Posterior vena cava (tissue), 2 donors: ENCODE measurements at regions of chr9 and their contacts with region 1.

Region 1: DNA sequence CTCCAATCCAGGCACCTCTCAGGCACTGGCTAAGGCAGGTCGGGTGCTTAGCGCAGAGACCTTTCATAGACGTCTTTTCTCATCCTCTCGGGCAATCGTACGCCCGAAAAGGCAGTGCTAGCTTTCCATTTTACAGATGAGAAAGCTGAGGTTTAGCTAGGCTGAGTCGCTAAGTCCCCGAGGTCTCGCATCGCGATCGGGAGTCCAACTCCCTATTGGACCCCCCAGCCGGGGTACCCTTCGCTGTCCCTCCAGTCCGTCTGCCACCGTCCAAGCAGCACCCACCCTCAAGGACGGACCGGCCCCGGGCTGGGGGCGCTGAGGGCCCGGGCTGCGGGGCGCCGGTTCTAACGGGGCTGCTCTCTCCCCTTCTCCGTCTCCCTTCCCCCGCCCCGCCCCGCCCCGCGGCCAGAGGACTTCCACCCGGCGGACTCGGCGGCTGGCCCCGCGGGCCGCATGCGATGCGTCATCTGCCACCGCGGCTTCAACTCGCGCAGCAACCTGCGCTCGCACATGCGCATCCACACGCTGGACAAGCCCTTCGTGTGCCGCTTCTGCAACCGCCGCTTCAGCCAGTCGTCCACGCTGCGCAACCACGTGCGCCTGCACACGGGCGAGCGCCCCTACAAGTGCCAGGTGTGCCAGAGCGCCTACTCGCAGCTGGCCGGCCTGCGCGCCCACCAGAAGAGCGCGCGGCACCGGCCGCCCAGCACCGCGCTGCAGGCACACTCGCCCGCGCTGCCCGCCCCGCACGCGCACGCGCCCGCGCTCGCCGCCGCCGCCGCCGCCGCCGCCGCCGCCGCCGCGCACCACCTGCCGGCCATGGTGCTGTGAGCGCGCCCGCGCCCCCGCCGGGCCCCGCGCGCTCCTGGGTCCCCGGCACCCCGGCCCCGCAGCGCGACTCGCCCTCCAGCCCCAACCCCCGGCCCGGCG is 12.5 kb upstream of the EXOSC2 start:
- DNase-seq: peak; percentile 94

Region 2: DNA sequence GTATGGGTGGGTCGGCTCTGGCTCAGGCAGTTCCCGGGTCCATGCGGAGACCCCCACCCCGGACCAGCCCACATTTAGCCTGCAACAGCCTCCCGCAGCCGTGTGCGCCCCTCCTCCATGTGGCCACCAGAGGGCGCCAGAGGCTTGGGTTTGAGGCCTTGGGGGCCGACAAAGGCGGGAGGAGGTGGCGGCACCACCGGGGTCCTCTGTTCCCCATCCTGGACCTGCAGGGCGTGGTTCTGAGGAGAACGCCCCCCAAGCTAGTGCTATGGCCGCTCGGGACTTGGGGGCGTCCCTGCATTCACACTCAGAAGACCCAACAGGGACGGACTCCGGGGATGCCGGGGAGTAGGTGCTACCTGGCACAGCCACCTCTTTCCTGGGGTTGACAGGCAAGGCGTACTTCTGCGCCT is 219.9 kb before region 1 on chr9:
- intact Hi-C with region 1: loop called (anchors 2 kb)
- DNase-seq: no peak

Region 3: DNA sequence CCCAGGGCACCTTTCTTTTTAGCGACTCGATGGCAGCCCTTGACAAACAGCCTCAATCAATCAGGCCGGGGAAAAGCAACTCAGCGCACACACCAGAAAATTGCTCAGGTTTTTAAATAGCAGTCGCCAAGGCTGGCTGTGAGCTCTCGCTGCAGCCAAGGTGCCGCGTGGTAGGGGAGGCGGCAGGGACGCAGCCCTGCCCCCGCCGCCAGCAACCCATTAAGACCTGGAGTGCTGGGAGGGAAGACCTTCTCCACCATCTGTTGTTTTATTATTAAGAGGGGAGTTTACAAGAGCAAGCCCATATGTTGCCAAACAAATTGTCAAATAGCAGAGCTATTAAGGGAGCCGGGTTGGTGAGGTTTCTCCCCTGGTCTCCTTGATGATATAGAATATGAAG is 213.7 kb before region 1 on chr9:
- intact Hi-C with region 1: loop called in 1 of 2 experiments (anchors 2 kb)
- DNase-seq: no peak